SK-N-SH (cell line): ENCODE measurements at regions of chr3 and their contacts with region 1.

Region 1: DNA sequence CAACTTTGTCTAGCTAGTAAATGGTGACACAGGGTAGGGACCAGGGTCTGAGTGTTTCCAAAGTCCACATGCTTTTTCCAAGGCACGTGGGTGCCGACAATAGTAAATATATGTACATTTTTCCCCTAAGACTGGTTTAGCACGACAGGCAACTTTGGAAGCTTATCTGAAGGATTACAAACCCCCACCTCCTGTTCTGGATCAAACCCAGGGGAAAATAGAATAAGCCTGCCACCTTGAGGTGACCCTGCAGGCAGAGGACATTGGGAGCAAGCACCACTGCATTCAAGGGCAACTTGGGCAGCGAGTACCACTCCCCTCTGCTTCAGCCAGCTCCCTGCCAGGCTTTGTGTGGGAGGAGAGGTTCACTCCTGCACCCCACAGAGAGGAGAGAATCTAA is 44.8 kb downstream of the KBTBD12 start:
- DNase-seq: peak; percentile 60
- H3K4me3 ChIP-seq: no peak overlapping the region
- H3K27ac ChIP-seq: no peak overlapping the region
- H3K4me1 ChIP-seq: peaks cover 0 to 10% of the 10 kb centered on the region in 2 experiments; a peak in 2 of 4 replicates
- H3K27me3 ChIP-seq: no peaks in the 10 kb centered on the region
- CTCF ChIP-seq: peak; percentile 54
- EP300 ChIP-seq: no peak
- RAD21 ChIP-seq: peak; percentile 85

Region 2: GRCh38 chr3:127622772-127623576 is 336.9 kb before region 1 on chr3:
- CTCF ChIA-PET with region 1: no interaction called
- POLR2A ChIA-PET with region 1: no interaction called
- DNase-seq: no peak
- H3K4me3 ChIP-seq: no peak overlapping the region
- H3K27ac ChIP-seq: no peak overlapping the region
- H3K4me1 ChIP-seq: no peaks in the 10 kb centered on the region
- H3K27me3 ChIP-seq: no peaks in the 10 kb centered on the region
- CTCF ChIP-seq: no peak
- EP300 ChIP-seq: no peak
- RAD21 ChIP-seq: no peak

Region 3: GRCh38 chr3:127646501-127647046 is 313.3 kb before region 1 on chr3:
- CTCF ChIA-PET with region 1: interaction called, 35 read pairs
- POLR2A ChIA-PET with region 1: no interaction called
- DNase-seq: peak; percentile 73
- H3K4me3 ChIP-seq: no peak overlapping the region
- H3K27ac ChIP-seq: peak overlapping the region in 1 of 2 experiments; percentile 34; a peak in 2 of 4 replicates
- H3K4me1 ChIP-seq: peaks cover 0 to 25% of the 10 kb centered on the region in 2 experiments; a peak in 2 of 4 replicates
- H3K27me3 ChIP-seq: no peaks in the 10 kb centered on the region
- CTCF ChIP-seq: no peak
- EP300 ChIP-seq: peak in 1 of 2 experiments; percentile 19; a peak in 1 of 4 replicates
- RAD21 ChIP-seq: 0 out of 2 replicates have a peak, but pooled peaks have one; percentile 1

Region 4: DNA sequence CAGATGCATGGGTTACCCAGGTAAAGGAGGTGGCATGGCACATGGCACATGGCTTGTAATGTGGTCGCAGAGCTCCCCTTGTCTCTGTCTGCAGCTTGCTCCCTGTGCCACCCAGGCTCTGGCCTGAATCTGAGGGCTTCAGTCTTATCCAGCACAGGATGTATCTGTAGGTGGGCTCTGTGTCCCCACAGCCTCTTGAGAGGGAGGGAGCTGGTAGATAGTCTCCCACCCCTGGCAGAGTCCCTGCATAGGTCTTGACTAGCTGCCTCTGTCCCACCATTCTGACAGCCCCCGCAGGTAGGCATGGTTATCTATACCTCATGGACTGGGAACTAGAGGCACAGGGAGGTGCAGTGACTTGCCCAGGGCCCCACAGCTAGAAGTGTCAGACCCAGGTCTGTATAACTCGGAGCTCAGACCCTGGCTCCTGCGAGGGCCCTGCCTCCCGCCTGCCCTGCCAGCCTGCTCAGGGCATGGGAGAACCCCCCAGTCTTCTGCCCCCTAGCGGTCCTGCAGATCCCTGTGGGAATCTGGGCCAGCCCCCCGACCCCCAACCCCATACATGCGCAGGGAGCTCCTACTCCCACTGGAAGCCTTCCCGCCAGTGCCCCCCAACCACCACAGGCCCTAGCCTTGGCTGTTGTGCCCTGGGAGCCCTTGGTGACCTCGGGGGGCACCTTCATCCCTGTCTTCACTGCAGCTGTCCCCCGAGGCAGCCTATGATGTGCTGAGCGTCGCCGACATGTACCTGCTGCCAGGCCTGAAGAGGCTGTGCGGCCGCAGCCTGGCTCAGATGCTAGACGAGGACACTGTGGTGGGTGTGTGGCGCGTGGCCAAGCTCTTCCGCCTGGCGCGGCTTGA is 280.3 kb before region 1 on chr3:
- CTCF ChIA-PET with region 1: interaction called, 23 read pairs
- POLR2A ChIA-PET with region 1: no interaction called
- DNase-seq: no peak
- H3K4me3 ChIP-seq: no peak overlapping the region
- H3K27ac ChIP-seq: no peak overlapping the region
- H3K4me1 ChIP-seq: peaks cover 0 to 2% of the 10 kb centered on the region in 2 experiments; a peak in 1 of 4 replicates
- H3K27me3 ChIP-seq: no peaks in the 10 kb centered on the region
- CTCF ChIP-seq: no peak
- EP300 ChIP-seq: no peak
- RAD21 ChIP-seq: no peak

Region 5: GRCh38 chr3:127791211-127791946 is 168.5 kb before region 1 on chr3:
- CTCF ChIA-PET with region 1: interaction called, 11 read pairs
- POLR2A ChIA-PET with region 1: no interaction called
- DNase-seq: no peak
- H3K4me3 ChIP-seq: no peak overlapping the region
- H3K27ac ChIP-seq: no peak overlapping the region
- H3K4me1 ChIP-seq: peaks cover 11 to 56% of the 10 kb centered on the region in 2 experiments; a peak in 3 of 4 replicates
- H3K27me3 ChIP-seq: no peaks in the 10 kb centered on the region
- CTCF ChIP-seq: no peak; the same call in 1 of the 2 replicates
- EP300 ChIP-seq: no peak
- RAD21 ChIP-seq: peak; percentile 29

Region 6: DNA sequence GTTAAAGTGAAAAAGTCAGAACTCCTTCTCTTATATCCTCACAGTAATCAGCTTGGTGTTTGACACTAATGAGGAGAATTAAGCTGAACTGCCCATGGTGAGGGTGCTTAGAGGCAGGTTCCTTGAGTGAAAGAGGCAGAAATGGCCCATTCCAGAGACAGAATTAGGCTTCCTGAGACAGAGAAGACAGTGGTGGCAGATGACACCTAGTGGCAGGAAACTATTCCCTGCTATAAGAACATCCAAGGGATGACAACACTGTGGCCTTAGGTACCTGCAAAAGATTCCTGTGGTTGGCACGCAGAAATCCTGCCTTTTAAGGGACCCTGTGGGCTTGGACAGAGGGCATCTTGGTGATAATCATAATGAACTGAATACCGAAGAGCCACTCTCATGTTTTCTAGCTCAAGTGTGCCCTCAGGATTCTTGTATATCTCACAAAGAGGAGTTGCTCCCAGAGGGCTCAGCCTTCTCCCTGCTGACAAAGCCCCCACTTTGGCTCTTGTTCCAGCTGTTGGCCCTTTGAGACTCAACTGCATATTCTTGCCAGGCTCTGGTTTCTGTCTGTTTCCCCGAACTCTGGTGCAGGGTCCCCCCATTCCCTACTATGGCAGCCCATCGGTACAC is 11.2 kb after region 1 on chr3:
- CTCF ChIA-PET with region 1: interaction called, 45 read pairs
- POLR2A ChIA-PET with region 1: no interaction called
- DNase-seq: peak; percentile 51
- H3K4me3 ChIP-seq: peak overlapping the region in 1 of 2 experiments; percentile 33; a peak in 1 of 4 replicates
- H3K27ac ChIP-seq: no peak overlapping the region
- H3K4me1 ChIP-seq: peaks cover 0 to 9% of the 10 kb centered on the region in 2 experiments; a peak in 2 of 4 replicates
- H3K27me3 ChIP-seq: peaks cover 6% of the 10 kb centered on the region; the same call in 1 of the 2 replicates
- CTCF ChIP-seq: peak; percentile 73
- EP300 ChIP-seq: no peak
- RAD21 ChIP-seq: peak; percentile 91

Region 7: GRCh38 chr3:128335324-128336201 is 375.7 kb after region 1 on chr3:
- CTCF ChIA-PET with region 1: no interaction called
- POLR2A ChIA-PET with region 1: no interaction called
- DNase-seq: no peak
- H3K4me3 ChIP-seq: no peak overlapping the region
- H3K27ac ChIP-seq: peak overlapping the region in 1 of 2 experiments; percentile 30; a peak in 1 of 4 replicates
- H3K4me1 ChIP-seq: peaks cover 0 to 48% of the 10 kb centered on the region in 2 experiments; a peak in 1 of 4 replicates
- H3K27me3 ChIP-seq: no peaks in the 10 kb centered on the region
- CTCF ChIP-seq: no peak
- EP300 ChIP-seq: no peak
- RAD21 ChIP-seq: no peak